Heart left ventricle (tissue), 16 donors: ENCODE measurements at regions of chr6 and their contacts with region 1.

Region 1: DNA sequence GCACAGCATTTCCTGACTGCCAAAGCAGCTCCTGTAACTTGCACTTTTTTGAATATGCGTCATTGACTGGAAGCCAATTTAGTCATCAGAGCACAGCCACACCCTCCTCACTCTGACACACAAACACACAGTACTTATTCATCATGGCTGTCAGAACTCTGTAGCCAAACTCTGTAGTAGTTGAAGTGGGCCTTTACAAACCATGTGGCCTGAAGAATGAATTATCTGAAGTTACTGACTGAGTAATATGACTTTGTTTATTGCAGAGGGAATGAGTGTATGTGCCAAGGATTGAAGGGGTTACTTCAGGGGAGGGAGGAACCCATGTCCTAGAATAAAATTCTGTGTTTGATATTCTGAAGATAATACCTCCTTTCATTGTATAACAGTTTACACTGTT is 102.7 kb downstream of the FIG4 start:
- DNase-seq: peak in 3 of 5 donors; percentile 19 to 39 (median 38)
- ATAC-seq: peak; percentile 65 to 99 (median 97)
- H3K4me3 ChIP-seq: no peak overlapping the region
- H3K27ac ChIP-seq: peak overlapping the region in 11 of 12 donors; percentile 14 to 66 (median 56)
- H3K4me1 ChIP-seq: peaks cover 3 to 18% (median 12%) of the 10 kb centered on the region in 12 donors
- H3K27me3 ChIP-seq: no peaks in the 10 kb centered on the region
- CTCF ChIP-seq: no peak
- POLR2A ChIP-seq: no peak

Region 2: GRCh38 chr6:109373762-109374161 is 420.0 kb before region 1 on chr6:
- intact Hi-C with region 1: no loop called
- DNase-seq: no peak
- ATAC-seq: peak in 2 of 4 donors; percentile 36 to 66
- H3K4me3 ChIP-seq: no peak overlapping the region
- H3K27ac ChIP-seq: peak overlapping the region in 1 of 12 donors; percentile 27
- H3K4me1 ChIP-seq: peaks cover 0 to 67% (median 14%) of the 10 kb centered on the region in 12 donors
- H3K27me3 ChIP-seq: no peaks in the 10 kb centered on the region
- CTCF ChIP-seq: no peak
- POLR2A ChIP-seq: no peak

Region 3: DNA sequence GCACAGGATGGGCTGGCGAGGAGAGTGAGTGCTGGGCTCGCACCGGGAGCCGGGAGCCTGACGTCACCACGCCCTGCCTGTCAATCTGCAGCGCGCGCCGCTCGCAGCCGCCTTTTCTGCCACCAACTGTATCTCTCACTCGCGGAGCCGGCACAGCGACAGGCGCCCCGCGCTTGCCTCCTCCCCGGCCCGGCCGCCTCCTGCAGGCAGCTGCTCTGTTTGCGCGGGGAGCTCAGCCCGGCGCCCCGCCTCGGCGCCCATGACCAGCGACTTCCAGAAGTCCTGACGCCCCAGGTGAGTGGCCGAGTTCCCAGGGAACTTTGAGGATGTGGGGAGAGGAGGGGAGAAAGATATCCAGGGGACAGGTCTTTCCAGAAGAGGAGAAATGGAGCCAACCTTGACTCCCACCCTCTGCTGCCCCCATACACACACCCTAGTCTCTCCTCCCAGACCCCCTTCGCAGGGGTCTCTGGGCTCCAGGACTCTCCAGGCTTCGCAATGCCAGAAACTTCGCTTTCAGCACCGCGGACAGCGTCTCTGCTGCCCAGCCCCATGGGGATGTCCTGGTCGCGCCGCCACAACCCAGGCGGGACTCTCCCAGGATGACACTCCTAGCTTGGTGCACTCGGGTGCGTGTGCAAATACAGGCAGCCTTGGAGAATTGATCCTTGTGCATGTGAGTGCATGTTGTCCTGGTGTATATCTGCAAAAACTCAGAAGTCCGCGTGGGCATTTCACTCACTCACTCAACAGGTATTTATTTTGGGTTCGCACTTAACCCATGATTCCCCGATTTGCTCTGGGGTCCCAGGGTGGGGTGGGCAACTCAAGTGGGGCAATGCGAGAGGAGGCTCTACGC is 184.6 kb after region 1 on chr6 and contains the start of gene GPR6:
- intact Hi-C with region 1: no loop called
- DNase-seq: peak; percentile 35 to 77 (median 64)
- ATAC-seq: peak in 3 of 4 donors; percentile 84 to 92 (median 87)
- H3K4me3 ChIP-seq: no peak within 1 kb of the TSS
- H3K27ac ChIP-seq: no peak within 1 kb of the TSS
- H3K4me1 ChIP-seq: peaks cover 0 to 13% (median 0%) of the 10 kb centered on the region in 12 donors
- H3K27me3 ChIP-seq: peaks cover 22 to 70% (median 38%) of the 10 kb centered on the region in 9 donors
- CTCF ChIP-seq: no peak
- POLR2A ChIP-seq: no peak
- total RNA-seq, gene GPR6: not detected

Region 4: DNA sequence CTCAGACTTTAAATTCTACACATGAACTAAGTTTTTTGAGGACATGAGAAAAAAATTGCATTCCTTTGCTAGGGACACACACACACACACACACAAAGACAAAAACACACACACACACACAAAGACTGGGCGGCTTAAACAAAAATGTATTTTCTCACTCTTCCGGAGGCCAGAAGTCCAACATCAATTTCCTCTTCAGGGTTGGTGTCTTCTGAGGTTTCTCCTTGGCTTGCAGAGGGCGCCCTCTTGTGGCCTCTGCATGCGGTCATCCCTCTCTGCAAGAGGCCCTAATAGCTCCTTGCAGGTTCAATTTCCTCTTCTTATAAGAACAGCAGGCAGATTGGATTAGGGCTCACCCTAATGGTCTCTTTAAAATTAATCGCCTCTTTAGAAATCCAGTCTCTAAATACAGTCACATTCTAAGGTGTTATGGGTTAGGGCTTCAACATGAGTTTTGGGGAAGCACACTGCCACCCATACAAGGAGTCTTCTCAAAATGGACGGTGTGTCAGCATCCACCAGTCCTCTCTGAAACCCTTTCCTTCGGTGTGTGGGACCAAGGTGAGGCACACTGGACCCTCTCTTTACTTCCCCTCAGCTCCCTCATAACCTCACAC is 245.7 kb after region 1 on chr6:
- intact Hi-C with region 1: loop called in 1 of 10 experiments (anchors 10 kb)
- DNase-seq: peak; percentile 75 to 90 (median 82)
- ATAC-seq: peak; percentile 79 to 94 (median 91)
- H3K4me3 ChIP-seq: peak overlapping the region in 10 of 12 donors; percentile 11 to 47 (median 31)
- H3K27ac ChIP-seq: peak overlapping the region in 1 of 12 donors; percentile 59
- H3K4me1 ChIP-seq: peaks cover 0 to 11% (median 0%) of the 10 kb centered on the region in 12 donors
- H3K27me3 ChIP-seq: no peaks in the 10 kb centered on the region
- CTCF ChIP-seq: peak; percentile 81 to 95 (median 88)
- POLR2A ChIP-seq: no peak